Mammary epithelial cell (primary cell): ENCODE measurements at regions of chr21 and their contacts with region 1.

Region 1: DNA sequence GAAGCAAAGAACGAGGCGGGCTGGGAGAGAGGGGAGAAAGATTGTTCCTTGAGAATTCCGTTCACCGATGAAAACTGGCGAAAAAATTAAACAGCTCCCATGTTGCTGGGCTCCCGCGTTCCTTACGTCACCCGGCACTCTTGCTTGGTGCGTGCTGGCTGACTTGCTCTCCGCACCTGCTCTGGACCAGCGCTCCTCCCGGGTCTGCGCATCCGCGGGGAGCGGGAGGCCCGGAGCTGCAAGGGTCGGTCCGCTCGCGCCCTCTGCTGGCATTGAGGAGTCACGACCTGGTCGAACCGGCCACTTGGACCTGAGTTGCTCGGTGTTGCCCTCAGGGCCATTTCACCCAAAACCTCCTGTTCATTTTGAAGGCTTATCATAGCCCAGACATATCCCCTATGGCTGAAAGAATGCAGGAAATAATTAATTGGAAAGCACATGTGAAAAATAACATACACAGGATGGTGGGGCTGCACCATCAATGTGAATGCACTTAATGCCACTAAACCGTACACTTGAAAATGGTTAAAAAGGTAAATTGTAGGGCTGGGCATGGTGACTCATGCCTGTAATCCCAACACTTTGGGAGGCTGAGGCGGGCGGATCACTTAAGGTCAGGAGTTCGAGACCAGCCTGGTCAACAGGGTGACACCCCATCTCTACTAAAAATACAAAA is 98.9 kb upstream of the BACE2 start:
- DNase-seq: peak; percentile 65
- H3K4me3 ChIP-seq: no peak overlapping the region
- H3K27ac ChIP-seq: no peak overlapping the region
- H3K4me1 ChIP-seq: peaks cover 3% of the 10 kb centered on the region
- H3K27me3 ChIP-seq: no peaks in the 10 kb centered on the region
- CTCF ChIP-seq: peak; percentile 79 to 98

Region 2: GRCh38 chr21:40143822-40144525 is 925.1 kb before region 1 on chr21:
- CTCF ChIA-PET with region 1: no interaction called
- dilution Hi-C with region 1: no loop called
- in situ Hi-C with region 1: loop called in 1 of 2 experiments (anchors 25 kb)
- intact Hi-C with region 1: loop called (anchors 1 kb)
- DNase-seq: peak; percentile 24
- H3K4me3 ChIP-seq: no peak overlapping the region
- H3K27ac ChIP-seq: no peak overlapping the region
- H3K4me1 ChIP-seq: no peaks in the 10 kb centered on the region
- H3K27me3 ChIP-seq: no peaks in the 10 kb centered on the region
- CTCF ChIP-seq: peak; percentile 63

Region 3: GRCh38 chr21:40393066-40393465 is 676.0 kb before region 1 on chr21:
- CTCF ChIA-PET with region 1: no interaction called
- dilution Hi-C with region 1: no loop called
- in situ Hi-C with region 1: no loop called
- intact Hi-C with region 1: loop called (anchors 10 kb)
- DNase-seq: no peak
- H3K4me3 ChIP-seq: no peak overlapping the region
- H3K27ac ChIP-seq: no peak overlapping the region
- H3K4me1 ChIP-seq: no peaks in the 10 kb centered on the region
- H3K27me3 ChIP-seq: no peaks in the 10 kb centered on the region
- CTCF ChIP-seq: no peak

Region 4: DNA sequence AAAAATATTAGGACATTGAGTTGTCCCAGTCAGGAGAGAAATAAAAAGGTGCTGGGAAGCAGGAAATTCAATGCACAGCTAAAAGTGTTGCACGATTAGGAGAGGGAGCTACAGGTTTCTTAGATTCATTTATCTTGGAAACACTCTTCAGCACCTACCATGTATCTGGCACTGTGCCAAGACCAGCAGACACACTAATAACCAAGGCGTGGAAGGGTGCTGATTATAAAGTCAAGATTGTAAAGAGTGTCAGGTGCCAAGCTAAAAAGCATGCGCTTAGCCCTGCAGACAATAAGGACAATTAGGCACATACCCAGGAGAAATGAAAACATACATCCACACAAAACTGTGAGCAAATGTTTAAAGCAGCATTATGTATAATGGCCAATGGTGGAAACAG is 352.1 kb before region 1 on chr21:
- CTCF ChIA-PET with region 1: interaction called, 4 read pairs
- dilution Hi-C with region 1: no loop called
- in situ Hi-C with region 1: no loop called
- intact Hi-C with region 1: loop called (anchors 1 kb)
- DNase-seq: peak; percentile 15
- H3K4me3 ChIP-seq: no peak overlapping the region
- H3K27ac ChIP-seq: no peak overlapping the region
- H3K4me1 ChIP-seq: peaks cover 23% of the 10 kb centered on the region
- H3K27me3 ChIP-seq: no peaks in the 10 kb centered on the region
- CTCF ChIP-seq: no peak

Region 5: DNA sequence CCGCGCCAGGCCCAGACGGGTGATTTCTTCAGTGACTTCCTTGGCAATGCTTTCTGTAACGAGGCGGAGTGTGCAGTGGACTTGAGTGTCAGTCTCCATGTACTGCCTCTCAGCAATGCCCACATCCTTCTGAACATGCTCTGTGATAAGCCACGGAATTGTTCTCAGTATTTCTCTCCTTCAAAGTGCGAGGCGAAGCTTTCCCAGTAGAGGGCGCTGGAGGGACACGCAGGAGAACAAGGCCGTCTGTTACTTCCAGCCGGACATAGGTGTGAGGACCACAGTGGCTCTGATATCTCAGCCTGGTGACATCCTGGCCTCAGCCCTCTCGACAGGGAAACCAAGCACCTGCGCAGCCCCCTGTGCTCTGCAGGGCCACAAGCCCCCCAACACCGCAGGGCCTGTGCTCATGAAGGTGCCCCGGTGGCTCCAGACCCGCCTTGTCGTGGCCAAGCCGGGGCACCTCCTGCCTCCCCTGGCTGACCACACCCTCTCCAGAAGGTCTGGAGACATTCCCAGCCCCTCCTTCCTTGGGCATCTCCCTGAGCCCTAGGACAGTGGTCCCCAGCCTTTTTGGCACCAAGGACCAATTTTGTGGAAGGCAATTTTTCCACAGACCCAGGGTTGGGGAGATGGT is 52.8 kb after region 1 on chr21:
- CTCF ChIA-PET with region 1: no interaction called
- dilution Hi-C with region 1: no loop called
- in situ Hi-C with region 1: no loop called
- intact Hi-C with region 1: no loop called
- DNase-seq: peak; percentile 70
- H3K4me3 ChIP-seq: no peak overlapping the region
- H3K27ac ChIP-seq: no peak overlapping the region
- H3K4me1 ChIP-seq: peaks cover 12% of the 10 kb centered on the region
- H3K27me3 ChIP-seq: no peaks in the 10 kb centered on the region
- CTCF ChIP-seq: peak; percentile 98 to 99